Naive thymus-derived CD4-positive, alpha-beta T cell (primary cell): ENCODE measurements at regions of chr7 and their contacts with region 1.

Region 1: DNA sequence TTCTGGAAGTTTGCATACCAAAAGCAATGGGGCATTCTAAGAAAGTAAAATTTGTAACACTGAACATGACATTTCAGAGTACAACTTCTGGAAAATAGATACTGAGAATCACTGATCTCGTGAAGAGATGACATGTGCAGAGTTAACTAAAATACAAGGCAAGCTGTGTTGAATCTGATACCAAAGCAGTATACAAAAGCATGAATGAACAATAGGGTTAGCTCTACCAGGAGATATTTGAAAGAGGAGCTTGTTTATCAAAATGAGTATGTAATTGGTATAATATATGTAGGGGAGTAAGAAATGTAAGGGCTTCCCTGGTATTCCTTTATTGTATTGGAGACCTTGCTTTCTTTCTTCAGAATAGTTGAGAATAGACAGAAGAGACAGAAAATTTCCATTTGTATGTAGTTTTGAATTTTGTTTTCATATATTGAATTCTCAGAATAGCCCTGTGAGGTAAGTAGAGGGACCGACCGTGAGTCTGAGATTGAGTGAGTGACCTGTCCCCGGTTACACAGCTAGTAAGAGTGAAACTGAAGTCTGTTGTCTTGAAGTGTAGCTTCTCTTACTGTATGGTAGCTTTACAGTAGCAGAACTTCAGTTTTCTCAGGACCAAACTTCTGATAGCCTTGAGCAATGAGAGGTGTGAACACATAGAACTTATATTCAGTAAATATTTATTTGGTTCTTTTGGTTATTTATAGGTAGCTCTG is 5.0 kb downstream of the HBP1 start:
- DNase-seq: no peak
- ATAC-seq: no peak
- H3K4me3 ChIP-seq: no peak overlapping the region
- H3K4me3 Mint-ChIP-seq: peak overlapping the region in 9 of 10 donors; percentile 15 to 77 (median 56)
- H3K27ac ChIP-seq: no peak overlapping the region
- H3K27ac Mint-ChIP-seq: peak overlapping the region in 6 of 9 donors; percentile 0 to 84 (median 27)
- H3K4me1 ChIP-seq: peaks cover 38 to 49% of the 10 kb centered on the region in 2 donors
- H3K4me1 Mint-ChIP-seq: peaks cover 48 to 87% (median 76%) of the 10 kb centered on the region in 7 donors
- H3K27me3 ChIP-seq: no peaks in the 10 kb centered on the region
- H3K27me3 Mint-ChIP-seq: peaks cover 0 to under 1% (median 0%) of the 10 kb centered on the region in 5 donors

Region 2: GRCh38 chr7:106952658-106953231 is 221.1 kb before region 1 on chr7:
- CTCF ChIA-PET with region 1: no interaction called
- POLR2A ChIA-PET with region 1: no interaction called
- intact Hi-C with region 1: no loop called
- DNase-seq: no peak
- ATAC-seq: peak; percentile 71
- H3K4me3 ChIP-seq: no peak overlapping the region
- H3K4me3 Mint-ChIP-seq: no peak overlapping the region
- H3K27ac ChIP-seq: no peak overlapping the region
- H3K27ac Mint-ChIP-seq: no peak overlapping the region
- H3K4me1 ChIP-seq: no peaks in the 10 kb centered on the region
- H3K4me1 Mint-ChIP-seq: peaks cover 0 to 5% (median 0%) of the 10 kb centered on the region in 7 donors
- H3K27me3 ChIP-seq: no peaks in the 10 kb centered on the region
- H3K27me3 Mint-ChIP-seq: peaks cover 0 to 13% (median 4%) of the 10 kb centered on the region in 5 donors

Region 3: DNA sequence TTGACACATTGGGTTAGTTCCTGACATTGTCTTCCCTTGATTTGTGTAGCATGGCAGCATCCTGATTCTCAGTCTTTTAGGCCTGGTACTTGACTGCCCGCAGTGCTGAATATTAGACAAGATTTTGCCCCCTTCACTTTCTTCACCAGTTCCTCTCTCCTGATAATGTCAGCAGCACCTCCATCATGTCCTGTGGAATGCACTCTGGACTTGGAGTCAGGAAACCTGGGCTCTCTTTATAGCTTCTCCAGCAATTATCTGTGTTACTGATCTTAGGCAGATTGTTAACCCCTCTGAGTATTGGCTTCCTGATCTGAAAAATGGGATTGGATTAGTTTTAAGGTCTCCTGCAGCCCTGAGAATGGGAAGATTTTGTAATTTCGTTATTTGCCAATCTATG is 13.9 kb after region 1 on chr7:
- CTCF ChIA-PET with region 1: interaction called, 3 read pairs
- POLR2A ChIA-PET with region 1: interaction called, 54 read pairs
- intact Hi-C with region 1: loop called in 1 of 2 experiments (anchors 2 kb)
- DNase-seq: no peak
- ATAC-seq: peak; percentile 16
- H3K4me3 ChIP-seq: no peak overlapping the region
- H3K4me3 Mint-ChIP-seq: no peak overlapping the region
- H3K27ac ChIP-seq: no peak overlapping the region
- H3K27ac Mint-ChIP-seq: peak overlapping the region in 5 of 9 donors; percentile 3 to 75 (median 6)
- H3K4me1 ChIP-seq: no peaks in the 10 kb centered on the region
- H3K4me1 Mint-ChIP-seq: peaks cover 0 to 44% (median 28%) of the 10 kb centered on the region in 7 donors
- H3K27me3 ChIP-seq: no peaks in the 10 kb centered on the region
- H3K27me3 Mint-ChIP-seq: no peaks in the 10 kb centered on the region